Calu3 (cell line): ENCODE measurements at regions of chr11 and their contacts with region 1.

Region 1: GRCh38 chr11:74929431-74930363 is 19.2 kb downstream of the XRRA1 start:
- DNase-seq: peak; percentile 68
- H3K4me3 Mint-ChIP-seq: no peak overlapping the region
- H3K27ac Mint-ChIP-seq: no peak overlapping the region
- H3K4me1 Mint-ChIP-seq: no peaks in the 10 kb centered on the region
- H3K27me3 Mint-ChIP-seq: no peaks in the 10 kb centered on the region
- CTCF ChIP-seq: peak; percentile 63

Region 2: DNA sequence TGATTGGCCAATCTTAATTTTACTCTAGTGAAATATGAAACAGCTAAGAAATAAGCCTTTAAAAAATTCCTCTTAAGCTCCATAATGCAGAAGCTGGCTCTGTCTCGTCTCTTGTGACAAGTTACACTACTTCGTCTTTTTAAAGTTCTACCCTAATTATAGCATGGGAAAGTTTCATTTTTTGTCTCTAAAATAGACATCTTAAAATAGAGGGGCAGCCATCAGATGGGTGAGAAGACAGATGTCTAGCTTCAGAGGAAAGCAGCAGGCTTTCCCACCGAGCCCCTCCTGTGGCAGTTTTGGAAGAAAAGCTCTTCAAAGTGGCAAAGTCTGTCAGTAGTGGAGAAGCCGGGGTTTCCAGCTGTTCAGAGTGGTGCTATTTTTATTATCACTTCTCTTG is 20.3 kb before region 1 on chr11:
- CTCF ChIA-PET with region 1: no interaction called
- intact Hi-C with region 1: no loop called
- DNase-seq: no peak
- H3K4me3 Mint-ChIP-seq: no peak overlapping the region
- H3K27ac Mint-ChIP-seq: no peak overlapping the region
- H3K4me1 Mint-ChIP-seq: no peaks in the 10 kb centered on the region
- H3K27me3 Mint-ChIP-seq: no peaks in the 10 kb centered on the region
- CTCF ChIP-seq: no peak

Region 3: GRCh38 chr11:75031771-75032549 is 102.3 kb after region 1 on chr11:
- CTCF ChIA-PET with region 1: no interaction called
- intact Hi-C with region 1: loop called (anchors 5 kb)
- DNase-seq: peak; percentile 82
- H3K4me3 Mint-ChIP-seq: no peak overlapping the region
- H3K27ac Mint-ChIP-seq: peak overlapping the region; percentile 63
- H3K4me1 Mint-ChIP-seq: peaks cover 23% of the 10 kb centered on the region
- H3K27me3 Mint-ChIP-seq: no peaks in the 10 kb centered on the region
- CTCF ChIP-seq: peak; percentile 67

Region 4: GRCh38 chr11:75113030-75113429 is 183.3 kb after region 1 on chr11:
- CTCF ChIA-PET with region 1: no interaction called
- intact Hi-C with region 1: no loop called
- DNase-seq: no peak
- H3K4me3 Mint-ChIP-seq: no peak overlapping the region
- H3K27ac Mint-ChIP-seq: no peak overlapping the region
- H3K4me1 Mint-ChIP-seq: no peaks in the 10 kb centered on the region
- H3K27me3 Mint-ChIP-seq: no peaks in the 10 kb centered on the region
- CTCF ChIP-seq: no peak

Region 5: GRCh38 chr11:75142714-75143419 is 213.2 kb after region 1 on chr11:
- CTCF ChIA-PET with region 1: interaction called, 4 read pairs
- intact Hi-C with region 1: loop called (anchors 5 kb)
- DNase-seq: peak; percentile 54
- H3K4me3 Mint-ChIP-seq: no peak overlapping the region
- H3K27ac Mint-ChIP-seq: peak overlapping the region; percentile 24
- H3K4me1 Mint-ChIP-seq: peaks cover 13% of the 10 kb centered on the region
- H3K27me3 Mint-ChIP-seq: peaks cover 32% of the 10 kb centered on the region
- CTCF ChIP-seq: no peak